Sciatic nerve (tissue), 2 donors: ENCODE measurements at regions of chr19 and their contacts with region 1.

Region 1: GRCh38 chr19:41563854-41564514 is 12.0 kb upstream of the CEACAM21 start:
- DNase-seq: no peak
- ATAC-seq: no peak

Region 2: DNA sequence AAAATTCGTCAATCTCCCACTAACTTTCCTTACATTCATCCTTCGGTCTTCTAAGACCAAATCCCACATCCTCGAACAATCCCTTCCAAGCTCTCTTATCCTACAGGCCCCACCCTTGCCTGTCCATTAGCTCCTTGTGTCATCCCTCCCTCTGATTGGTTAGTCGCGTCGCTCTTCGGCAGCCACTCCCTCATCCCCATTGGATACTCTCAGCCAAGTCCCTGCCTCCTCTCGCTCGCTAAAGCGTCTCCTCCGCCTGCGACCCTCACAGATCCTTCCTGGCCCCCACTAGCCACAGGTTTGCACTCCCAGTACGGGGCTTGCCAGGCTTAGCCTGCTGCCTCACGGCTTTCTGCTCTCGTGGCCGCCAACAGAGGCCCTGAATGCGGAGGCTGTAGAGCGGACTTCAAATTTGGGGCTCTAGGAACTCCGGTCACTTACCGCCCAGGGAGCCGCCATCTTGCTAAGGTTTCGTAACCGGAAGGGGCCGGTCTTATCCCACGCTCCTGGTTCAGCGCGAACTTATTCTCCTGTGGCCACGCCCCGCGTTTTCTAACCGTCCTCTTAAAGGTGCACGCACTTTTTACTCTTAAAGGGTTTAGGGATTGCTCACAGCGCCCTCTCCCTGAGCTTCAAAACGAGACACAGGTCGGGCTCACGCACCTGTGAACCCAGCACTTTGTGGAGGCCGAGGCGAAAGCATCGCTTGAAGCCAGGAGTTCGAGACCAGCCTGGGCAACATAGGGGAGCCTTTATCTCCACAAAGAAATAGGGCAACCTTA is 124.4 kb before region 1 on chr19 and contains the start of gene DMAC2:
- intact Hi-C with region 1: no loop called
- DNase-seq: peak; percentile 98
- ATAC-seq: peak; percentile 99
- total RNA-seq, gene DMAC2: 33.9 TPM

Region 3: DNA sequence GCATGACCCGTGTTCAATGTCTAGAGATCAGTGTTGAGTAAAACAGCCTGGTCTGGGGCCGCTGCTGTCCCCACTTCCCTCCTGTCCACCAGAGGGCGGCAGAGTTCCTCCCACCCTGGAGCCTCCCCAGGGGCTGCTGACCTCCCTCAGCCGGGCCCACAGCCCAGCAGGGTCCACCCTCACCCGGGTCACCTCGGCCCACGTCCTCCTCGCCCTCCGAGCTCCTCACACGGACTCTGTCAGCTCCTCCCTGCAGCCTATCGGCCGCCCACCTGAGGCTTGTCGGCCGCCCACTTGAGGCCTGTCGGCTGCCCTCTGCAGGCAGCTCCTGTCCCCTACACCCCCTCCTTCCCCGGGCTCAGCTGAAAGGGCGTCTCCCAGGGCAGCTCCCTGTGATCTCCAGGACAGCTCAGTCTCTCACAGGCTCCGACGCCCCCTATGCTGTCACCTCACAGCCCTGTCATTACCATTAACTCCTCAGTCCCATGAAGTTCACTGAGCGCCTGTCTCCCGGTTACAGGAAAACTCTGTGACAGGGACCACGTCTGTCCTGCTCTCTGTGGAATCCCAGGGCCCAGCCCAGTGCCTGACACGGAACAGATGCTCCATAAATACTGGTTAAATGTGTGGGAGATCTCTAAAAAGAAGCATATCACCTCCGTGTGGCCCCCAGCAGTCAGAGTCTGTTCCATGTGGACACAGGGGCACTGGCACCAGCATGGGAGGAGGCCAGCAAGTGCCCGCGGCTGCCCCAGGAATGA is 142.9 kb after region 1 on chr19:
- intact Hi-C with region 1: no loop called
- DNase-seq: peak; percentile 59
- ATAC-seq: peak; percentile 42

Region 4: DNA sequence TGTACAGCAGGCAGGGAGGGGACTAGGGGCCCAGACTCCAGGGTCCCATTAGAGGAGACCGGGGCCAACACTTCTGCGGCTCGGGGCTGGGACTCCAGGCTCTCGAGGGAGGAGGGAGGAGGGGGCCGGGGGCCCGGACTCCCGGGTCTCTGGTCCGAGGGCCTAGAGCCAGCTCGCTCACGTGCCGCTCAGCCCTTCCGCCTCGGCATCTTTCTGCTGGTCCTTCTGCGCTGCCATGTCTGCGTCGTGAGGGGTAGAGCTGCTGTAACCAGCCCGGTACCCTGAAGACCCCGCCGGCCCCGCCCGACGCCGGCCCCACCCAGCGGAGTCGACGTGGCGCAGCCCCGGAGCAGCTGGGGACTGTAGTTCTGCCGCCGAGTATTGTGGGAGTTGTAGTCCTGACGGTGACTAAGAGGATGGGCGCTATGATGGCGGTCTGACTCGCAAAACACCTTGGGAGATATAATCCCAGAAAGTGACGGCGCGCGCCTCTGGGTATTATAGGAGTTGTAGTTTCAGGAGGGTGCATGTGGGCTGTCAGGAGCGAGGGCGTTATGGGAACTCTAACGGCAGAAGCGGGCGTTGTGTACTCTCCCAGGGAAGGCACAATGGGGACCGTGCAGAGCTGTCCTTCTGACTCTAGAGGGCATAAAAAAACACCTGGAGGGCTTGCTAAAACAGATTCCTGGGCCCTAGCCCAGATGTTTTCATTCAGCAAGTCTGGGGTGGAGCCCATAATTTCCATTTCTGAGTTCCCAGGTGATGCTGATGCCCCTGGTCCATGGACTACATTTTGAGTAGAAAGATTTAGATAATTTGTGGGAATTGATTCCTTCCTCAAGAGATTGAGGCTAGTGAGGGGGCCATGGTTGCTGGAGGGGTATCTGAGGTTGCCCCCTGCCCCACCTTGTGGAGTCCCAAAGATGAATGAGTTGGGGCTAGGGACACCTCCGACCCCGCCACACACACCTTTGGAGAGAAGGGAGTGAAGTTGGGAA is 395.4 kb after region 1 on chr19 and contains the start of gene RABAC1:
- intact Hi-C with region 1: loop called (anchors 5 kb)
- DNase-seq: peak; percentile 92
- ATAC-seq: peak; percentile 97
- total RNA-seq, gene RABAC1: 133 TPM